ENCODE measurements at regions of chr4 and their contacts with region 1.

Region 1: GRCh38 chr4:155787113-155787710 is 28.4 kb downstream of the GUCY1B1 start:
- DNase-seq: no peak
- ATAC-seq: peak; percentile 83 to 94
- H3K4me3 ChIP-seq: no peak overlapping the region
- H3K27ac ChIP-seq: no peak overlapping the region
- H3K4me1 ChIP-seq: peaks cover 10% of the 10 kb centered on the region
- H3K27me3 ChIP-seq: no peaks in the 10 kb centered on the region
- CTCF ChIP-seq: peak; percentile 71

Region 2: DNA sequence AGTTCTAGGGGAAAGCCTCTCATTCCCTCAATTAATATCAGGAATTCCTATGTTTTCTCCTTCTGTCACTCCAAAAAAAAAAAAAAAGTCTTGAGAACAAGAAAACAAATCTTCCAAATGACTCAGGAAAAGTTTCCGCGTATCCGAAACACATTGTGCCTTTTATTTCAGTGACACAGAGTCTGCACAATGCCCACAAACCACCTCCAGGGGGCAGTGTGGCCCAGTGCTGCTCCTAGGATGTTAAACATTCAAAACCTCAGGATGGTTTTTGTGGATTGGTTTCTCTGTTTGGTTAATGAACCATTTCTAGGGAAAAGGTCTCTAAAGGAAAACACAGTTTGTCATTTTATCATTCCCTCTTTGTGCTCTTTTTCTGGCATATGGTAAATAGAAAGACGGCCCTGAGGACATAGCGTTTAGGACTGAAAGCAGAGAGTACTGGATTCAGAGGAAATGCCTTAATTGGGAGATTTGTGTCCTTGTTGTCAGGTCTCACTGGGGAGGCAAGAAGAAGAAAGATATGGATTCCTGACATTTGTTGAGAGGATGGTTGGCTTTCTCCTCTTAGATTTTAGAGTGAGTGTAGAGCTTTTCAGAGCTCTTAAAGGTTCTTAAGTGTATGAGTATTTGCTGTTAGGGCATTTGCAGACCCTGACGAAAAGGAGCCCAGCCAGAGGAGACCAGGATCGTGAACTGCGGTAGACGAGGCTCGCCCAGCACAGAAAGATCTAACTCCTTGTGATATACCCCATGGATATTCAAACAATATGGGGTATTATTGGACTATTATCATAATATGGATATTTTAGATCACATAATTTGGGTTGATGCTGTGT is 344.7 kb before region 1 on chr4:
- intact Hi-C with region 1: loop called (anchors 10 kb)
- DNase-seq: peak; percentile 79
- ATAC-seq: peak; percentile 93 to 95
- H3K4me3 ChIP-seq: peak overlapping the region; percentile 22
- H3K27ac ChIP-seq: no peak overlapping the region
- H3K4me1 ChIP-seq: peaks cover 12% of the 10 kb centered on the region
- H3K27me3 ChIP-seq: no peaks in the 10 kb centered on the region
- CTCF ChIP-seq: peak; percentile 94

Region 3: GRCh38 chr4:156321203-156321602 is 534.0 kb after region 1 on chr4:
- intact Hi-C with region 1: no loop called
- DNase-seq: no peak
- ATAC-seq: no peak
- H3K4me3 ChIP-seq: no peak overlapping the region
- H3K27ac ChIP-seq: no peak overlapping the region
- H3K4me1 ChIP-seq: no peaks in the 10 kb centered on the region
- H3K27me3 ChIP-seq: no peaks in the 10 kb centered on the region
- CTCF ChIP-seq: no peak

Measured in lower lobe of right lung (tissue), 2 donors.